ENCODE measurements at regions of chr3 and their contacts with region 1.

Region 1: DNA sequence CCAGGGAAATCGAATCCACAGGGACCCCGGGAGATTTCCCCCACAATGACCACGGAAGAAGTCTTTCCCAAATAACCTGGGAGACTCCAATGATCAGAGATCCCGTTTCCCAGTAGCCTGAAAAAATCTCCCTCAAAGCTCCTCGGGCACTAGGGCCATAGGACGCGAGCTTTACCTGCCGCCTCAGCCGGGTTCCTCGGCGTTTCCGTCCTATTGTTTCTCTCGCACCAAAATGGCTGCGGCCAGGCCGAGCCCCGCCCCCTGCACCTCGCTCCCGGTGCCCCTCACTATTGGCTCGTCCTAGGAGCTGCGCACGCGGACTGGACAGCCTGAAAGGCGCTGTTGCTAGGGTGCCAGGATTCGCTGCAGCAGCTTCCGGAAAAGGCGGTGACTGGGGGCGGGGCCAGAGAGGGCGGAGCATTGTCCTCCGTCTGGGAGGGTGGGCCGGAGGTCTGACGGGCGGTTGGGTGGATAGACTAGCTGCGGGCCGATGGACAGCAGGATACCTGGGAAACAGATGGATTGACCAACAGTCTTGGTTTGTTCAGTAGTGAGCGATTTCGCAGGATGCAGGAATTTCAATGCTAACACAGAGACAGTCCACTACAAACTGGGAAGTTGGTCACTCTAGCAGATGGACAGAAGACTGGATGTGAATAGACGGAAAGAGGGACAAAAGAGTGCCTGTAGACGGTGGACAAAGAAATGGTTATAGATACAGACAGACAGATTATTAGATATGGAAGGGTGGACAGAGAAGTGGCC is at the start of gene IP6K2:
- DNase-seq: peak; percentile 99
- ATAC-seq: peak; percentile 99
- H3K4me3 Mint-ChIP-seq: peak within 1 kb of the TSS; percentile 96
- H3K27ac Mint-ChIP-seq: peak within 1 kb of the TSS; percentile 97
- H3K4me1 Mint-ChIP-seq: peaks cover 30% of the 10 kb centered on the region
- H3K27me3 Mint-ChIP-seq: no peaks in the 10 kb centered on the region
- CTCF ChIP-seq: no peak
- total RNA-seq, gene IP6K2: 47.7 to 48.0 TPM

Region 2: GRCh38 chr3:48581621-48582481 is 135.3 kb before region 1 on chr3:
- CTCF ChIA-PET with region 1: no interaction called
- POLR2A ChIA-PET with region 1: no interaction called
- intact Hi-C with region 1: no loop called
- DNase-seq: no peak
- ATAC-seq: no peak
- H3K4me3 Mint-ChIP-seq: no peak overlapping the region
- H3K27ac Mint-ChIP-seq: no peak overlapping the region
- H3K4me1 Mint-ChIP-seq: no peaks in the 10 kb centered on the region
- H3K27me3 Mint-ChIP-seq: no peaks in the 10 kb centered on the region
- CTCF ChIP-seq: no peak

Region 3: GRCh38 chr3:48644898-48645760 is 72.0 kb before region 1 on chr3:
- CTCF ChIA-PET with region 1: no interaction called
- POLR2A ChIA-PET with region 1: no interaction called
- intact Hi-C with region 1: no loop called
- DNase-seq: no peak
- ATAC-seq: no peak
- H3K4me3 Mint-ChIP-seq: no peak overlapping the region
- H3K27ac Mint-ChIP-seq: no peak overlapping the region
- H3K4me1 Mint-ChIP-seq: no peaks in the 10 kb centered on the region
- H3K27me3 Mint-ChIP-seq: no peaks in the 10 kb centered on the region
- CTCF ChIP-seq: no peak

Region 4: DNA sequence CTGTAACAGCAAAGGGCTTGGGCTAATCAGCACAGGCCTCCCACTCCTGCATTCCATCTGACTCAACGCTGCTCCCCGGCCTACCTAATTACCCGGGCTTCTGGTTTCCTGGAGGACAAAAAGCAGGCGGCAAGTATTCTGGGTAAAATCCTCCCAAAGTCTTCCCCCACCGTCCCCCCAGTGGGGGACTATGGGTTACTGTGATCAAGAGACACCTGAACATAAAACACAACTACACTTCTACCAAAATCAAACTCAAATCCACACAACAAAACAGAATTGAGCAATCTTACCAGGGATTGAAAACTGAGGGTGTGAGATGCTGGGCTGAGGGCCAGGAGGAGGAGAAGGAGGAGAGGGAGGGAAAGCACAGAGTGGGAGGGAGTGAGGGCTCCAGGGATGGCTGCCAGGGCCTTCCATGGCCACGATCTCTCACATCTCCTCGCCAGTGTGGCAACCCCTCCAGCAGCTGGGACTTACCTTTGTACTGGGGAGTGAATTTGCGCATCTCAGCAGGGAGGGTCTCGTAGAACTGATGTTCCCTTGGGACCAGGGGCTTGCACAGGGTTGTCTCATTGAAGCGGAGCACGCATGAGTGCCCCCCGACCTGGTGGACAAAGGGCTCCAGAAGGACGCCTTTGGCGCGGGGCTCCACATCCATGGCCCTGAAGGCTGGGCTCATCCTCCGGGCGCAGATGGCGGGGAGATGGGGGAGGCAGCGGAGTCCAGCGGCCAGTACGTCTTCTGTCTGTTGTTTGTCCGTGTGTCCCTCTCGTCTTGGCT is 22.4 kb before region 1 on chr3:
- CTCF ChIA-PET with region 1: no interaction called
- POLR2A ChIA-PET with region 1: interaction called, 18 read pairs
- intact Hi-C with region 1: no loop called
- DNase-seq: no peak
- ATAC-seq: no peak
- H3K4me3 Mint-ChIP-seq: no peak overlapping the region
- H3K27ac Mint-ChIP-seq: peak overlapping the region; percentile 40
- H3K4me1 Mint-ChIP-seq: peaks cover 18% of the 10 kb centered on the region
- H3K27me3 Mint-ChIP-seq: no peaks in the 10 kb centered on the region
- CTCF ChIP-seq: no peak

Region 5: GRCh38 chr3:48739955-48740823 is 23.0 kb after region 1 on chr3:
- CTCF ChIA-PET with region 1: interaction called, 10 read pairs
- POLR2A ChIA-PET with region 1: interaction called, 5 read pairs
- intact Hi-C with region 1: no loop called
- DNase-seq: peak; percentile 74
- ATAC-seq: peak; percentile 98
- H3K4me3 Mint-ChIP-seq: no peak overlapping the region
- H3K27ac Mint-ChIP-seq: no peak overlapping the region
- H3K4me1 Mint-ChIP-seq: peaks cover 2% of the 10 kb centered on the region
- H3K27me3 Mint-ChIP-seq: no peaks in the 10 kb centered on the region
- CTCF ChIP-seq: peak; percentile 66

Measured in activated CD8-positive, alpha-beta T cell treated with anti-CD3 and anti-CD28 coated beads for 36 hours (primary cell).